Dendritic cell treated with granulocyte-macrophage colony-stimulating factor and Interleukin-4, amounts not matched to agents 40 ng/mL and 50 ng/mL, for 4 days (primary cell): ENCODE measurements at regions of chr10 and their contacts with region 1.

Region 1: DNA sequence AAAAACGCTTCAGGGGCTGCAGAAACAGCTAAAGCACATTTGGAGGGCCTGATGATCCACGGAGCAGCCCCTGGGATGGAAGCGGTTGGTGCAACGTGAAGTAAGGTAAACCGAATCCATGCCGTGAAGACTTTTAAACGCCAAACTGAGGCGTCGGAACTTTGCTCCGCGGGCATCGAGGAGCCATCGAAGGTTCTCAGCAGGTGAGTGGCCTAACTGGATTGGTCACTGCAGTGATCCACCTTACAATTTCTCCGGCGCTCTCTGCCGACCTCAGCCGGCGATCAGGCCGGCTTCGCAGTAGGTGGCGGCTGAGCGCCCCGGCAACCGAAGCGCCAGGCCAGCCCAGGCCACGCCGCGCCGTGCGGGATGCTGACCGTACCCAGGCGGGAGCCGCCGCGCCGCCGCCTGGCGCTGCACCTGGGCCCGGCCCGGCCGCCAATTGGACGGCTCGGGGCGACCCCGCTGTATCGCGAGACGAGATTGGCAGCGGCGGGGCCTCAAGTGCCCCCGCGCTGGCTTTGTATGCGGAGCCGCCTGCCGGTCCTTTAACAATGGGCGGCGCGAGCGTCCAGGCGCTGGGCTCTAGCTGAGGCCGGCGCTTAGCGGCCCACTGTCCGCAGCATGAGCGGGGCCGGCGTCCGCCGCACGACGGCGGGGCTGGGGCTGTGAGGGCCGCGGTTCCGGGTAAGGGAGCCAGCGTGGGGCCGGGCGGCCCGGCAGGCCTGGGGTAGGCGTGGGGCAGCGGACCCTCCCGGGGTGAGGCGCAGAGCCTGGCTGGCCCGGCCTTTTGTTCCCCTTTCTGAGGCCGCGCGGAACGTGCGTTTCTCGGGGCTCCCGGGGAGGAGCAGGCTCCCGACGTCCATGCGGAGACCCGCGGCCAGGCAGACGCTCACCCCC is at the start of gene CCNJ:
- H3K4me3 Mint-ChIP-seq: peak within 1 kb of the TSS; percentile 94
- H3K27ac Mint-ChIP-seq: peak within 1 kb of the TSS; percentile 97
- H3K4me1 Mint-ChIP-seq: peaks cover 38% of the 10 kb centered on the region
- H3K27me3 Mint-ChIP-seq: no peaks in the 10 kb centered on the region

Region 2: DNA sequence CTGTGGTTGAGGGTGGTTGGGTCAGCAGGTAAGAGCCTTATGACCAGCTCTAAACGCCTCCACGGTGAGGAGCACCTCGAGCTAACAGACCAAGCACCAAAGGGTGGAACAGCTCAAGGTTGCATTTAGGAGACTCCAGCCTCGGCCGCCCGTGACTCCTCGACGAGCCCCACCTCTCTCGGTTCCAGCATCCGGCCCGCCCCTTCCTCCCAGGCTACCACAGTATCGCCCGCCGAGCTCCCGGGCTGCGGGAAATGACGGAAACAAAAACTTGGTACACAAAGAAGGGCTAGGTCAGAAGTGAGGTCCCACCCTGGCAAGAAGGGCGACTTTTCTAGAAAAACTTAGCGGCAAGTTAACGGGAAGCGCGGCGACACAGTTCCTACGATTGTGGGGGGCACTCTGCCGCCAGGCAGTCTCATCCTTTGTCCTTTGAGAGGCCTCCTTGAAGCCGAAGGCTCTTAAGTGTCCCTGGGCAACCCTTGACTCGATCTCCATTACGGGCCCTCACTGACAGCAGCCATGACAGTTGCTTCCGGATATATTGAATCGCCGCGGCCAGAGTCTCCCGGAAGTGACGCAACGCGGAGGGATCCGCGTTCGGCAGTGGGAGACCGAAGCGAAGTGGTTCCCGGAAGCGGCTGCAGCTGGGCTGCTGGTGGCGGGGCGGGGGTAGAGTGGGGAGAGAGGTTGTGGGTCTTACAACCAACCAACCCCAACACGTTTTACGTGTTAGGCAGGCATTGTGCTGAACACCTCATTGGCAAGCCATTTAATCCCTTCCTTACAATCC is 46.6 kb after region 1 on chr10:
- intact Hi-C with region 1: loop called (anchors 5 kb)
- H3K4me3 Mint-ChIP-seq: peak overlapping the region; percentile 81
- H3K27ac Mint-ChIP-seq: peak overlapping the region; percentile 98
- H3K4me1 Mint-ChIP-seq: no peaks in the 10 kb centered on the region
- H3K27me3 Mint-ChIP-seq: peaks cover 27% of the 10 kb centered on the region

Region 3: DNA sequence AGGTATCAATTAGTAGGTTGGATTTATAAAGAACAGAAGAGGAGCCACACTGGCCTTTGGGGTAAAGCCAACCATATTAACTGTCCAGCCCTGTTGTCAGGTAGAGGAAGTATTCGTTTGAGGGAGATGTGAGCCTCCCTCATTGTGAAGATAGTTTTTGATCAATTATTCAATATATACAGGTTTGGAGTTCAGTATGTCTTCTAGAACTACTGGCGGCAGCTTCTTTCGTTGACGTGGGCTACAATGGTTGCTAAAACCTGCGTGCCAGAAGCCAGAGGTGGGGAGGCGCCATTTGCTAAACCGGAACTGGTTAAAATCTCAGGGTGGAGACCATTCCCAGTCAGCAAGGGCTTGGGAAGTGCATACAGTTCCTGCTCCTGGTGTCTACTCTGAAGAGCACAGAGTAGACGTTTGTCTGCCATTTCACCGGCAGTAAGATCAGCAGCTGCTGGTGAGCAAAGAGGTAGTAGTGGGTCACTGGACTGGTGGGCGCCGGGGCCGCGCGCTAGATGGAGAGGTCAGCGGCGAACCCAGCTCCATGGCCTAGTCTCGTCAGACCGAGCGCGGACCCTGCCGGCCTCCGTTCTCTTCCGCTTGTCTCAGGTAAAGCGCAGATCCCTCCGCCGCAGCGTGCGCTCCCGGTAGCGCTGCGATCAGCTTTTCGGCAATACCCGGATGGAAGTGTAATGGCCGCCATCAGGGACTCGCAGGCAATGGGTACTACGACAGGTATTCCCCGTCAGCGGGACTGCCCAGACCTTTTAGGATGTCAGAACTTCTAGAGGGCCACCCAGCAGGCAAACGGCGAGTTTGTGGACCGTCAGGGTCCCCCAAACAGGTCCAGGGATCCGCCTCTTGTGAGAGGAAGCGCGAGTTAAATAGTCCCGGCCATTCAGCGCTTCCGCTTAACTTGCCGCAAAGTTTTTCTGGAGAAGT is 86.4 kb after region 1 on chr10 and contains the start of gene ZNF518A:
- intact Hi-C with region 1: loop called (anchors 5 kb)
- H3K4me3 Mint-ChIP-seq: peak within 1 kb of the TSS; percentile 87
- H3K27ac Mint-ChIP-seq: peak within 1 kb of the TSS; percentile 99
- H3K4me1 Mint-ChIP-seq: peaks cover 22% of the 10 kb centered on the region
- H3K27me3 Mint-ChIP-seq: peaks cover 17% of the 10 kb centered on the region